Activated CD4-positive, alpha-beta memory T cell treated with anti-CD3 and anti-CD28 coated beads for 36 hours (primary cell): ENCODE measurements at regions of chr7 and their contacts with region 1.

Region 1: GRCh38 chr7:76314042-76314721 is 11.7 kb downstream of the HSPB1 start:
- DNase-seq: peak; percentile 98
- H3K4me3 Mint-ChIP-seq: no peak overlapping the region
- H3K27ac Mint-ChIP-seq: peak overlapping the region; percentile 62
- H3K4me1 Mint-ChIP-seq: peaks cover 17% of the 10 kb centered on the region
- H3K27me3 Mint-ChIP-seq: no peaks in the 10 kb centered on the region

Region 2: GRCh38 chr7:76047811-76048667 is 266.1 kb before region 1 on chr7 and contains the starts of genes MDH2 and STYXL1:
- CTCF ChIA-PET with region 1: interaction called, 4 read pairs
- POLR2A ChIA-PET with region 1: interaction called, 5 read pairs
- intact Hi-C with region 1: loop called (anchors 2 kb)
- DNase-seq: peak; percentile 96
- H3K4me3 Mint-ChIP-seq: peak within 1 kb of the TSS; percentile 92
- H3K27ac Mint-ChIP-seq: peak within 1 kb of the TSS; percentile 90
- H3K4me1 Mint-ChIP-seq: peaks cover 42% of the 10 kb centered on the region
- H3K27me3 Mint-ChIP-seq: no peaks in the 10 kb centered on the region
- total RNA-seq, gene MDH2: 259 to 271 TPM
- total RNA-seq, gene STYXL1: 37.8 to 40.5 TPM

Region 3: GRCh38 chr7:76142861-76143260 is 171.3 kb before region 1 on chr7:
- CTCF ChIA-PET with region 1: no interaction called
- POLR2A ChIA-PET with region 1: no interaction called
- intact Hi-C with region 1: no loop called
- DNase-seq: no peak
- H3K4me3 Mint-ChIP-seq: no peak overlapping the region
- H3K27ac Mint-ChIP-seq: no peak overlapping the region
- H3K4me1 Mint-ChIP-seq: no peaks in the 10 kb centered on the region
- H3K27me3 Mint-ChIP-seq: peaks cover 3% of the 10 kb centered on the region

Region 4: GRCh38 chr7:76262683-76263402 is 51.3 kb before region 1 on chr7:
- CTCF ChIA-PET with region 1: interaction called, 25 read pairs
- POLR2A ChIA-PET with region 1: no interaction called
- intact Hi-C with region 1: loop called (anchors 1 kb)
- DNase-seq: peak; percentile 54
- H3K4me3 Mint-ChIP-seq: no peak overlapping the region
- H3K27ac Mint-ChIP-seq: no peak overlapping the region
- H3K4me1 Mint-ChIP-seq: peaks cover under 1% of the 10 kb centered on the region
- H3K27me3 Mint-ChIP-seq: peaks cover 24% of the 10 kb centered on the region

Region 5: GRCh38 chr7:76297387-76297756 is 16.8 kb before region 1 on chr7:
- CTCF ChIA-PET with region 1: interaction called, 43 read pairs
- POLR2A ChIA-PET with region 1: interaction called, 7 read pairs
- intact Hi-C with region 1: no loop called
- DNase-seq: no peak
- H3K4me3 Mint-ChIP-seq: no peak overlapping the region
- H3K27ac Mint-ChIP-seq: no peak overlapping the region
- H3K4me1 Mint-ChIP-seq: peaks cover 3% of the 10 kb centered on the region
- H3K27me3 Mint-ChIP-seq: peaks cover 3% of the 10 kb centered on the region

Region 6: GRCh38 chr7:76343294-76343930 is 29.2 kb after region 1 on chr7:
- CTCF ChIA-PET with region 1: interaction called, 5 read pairs
- POLR2A ChIA-PET with region 1: interaction called, 3 read pairs
- intact Hi-C with region 1: loop called (anchors 1 kb)
- DNase-seq: peak; percentile 48
- H3K4me3 Mint-ChIP-seq: no peak overlapping the region
- H3K27ac Mint-ChIP-seq: peak overlapping the region; percentile 53
- H3K4me1 Mint-ChIP-seq: peaks cover 76% of the 10 kb centered on the region
- H3K27me3 Mint-ChIP-seq: no peaks in the 10 kb centered on the region